ENCODE measurements at regions of chr16 and their contacts with region 1.

Region 1: GRCh38 chr16:10944249-10945064 is at the start of gene CLEC16A:
- DNase-seq: peak; percentile 95
- H3K4me3 Mint-ChIP-seq: peak within 1 kb of the TSS; percentile 82
- H3K27ac Mint-ChIP-seq: peak within 1 kb of the TSS; percentile 79
- H3K4me1 Mint-ChIP-seq: peaks cover 49% of the 10 kb centered on the region
- H3K27me3 Mint-ChIP-seq: no peaks in the 10 kb centered on the region
- total RNA-seq, gene CLEC16A: 44.8 and 48.7 TPM in 2 replicates

Region 2: GRCh38 chr16:10743610-10744393 is 200.7 kb before region 1 on chr16 and contains the start of gene NUBP1:
- intact Hi-C with region 1: loop called (anchors 2 kb)
- DNase-seq: peak; percentile 96
- H3K4me3 Mint-ChIP-seq: peak within 1 kb of the TSS; percentile 88
- H3K27ac Mint-ChIP-seq: peak within 1 kb of the TSS; percentile 96
- H3K4me1 Mint-ChIP-seq: peaks cover 44% of the 10 kb centered on the region
- H3K27me3 Mint-ChIP-seq: no peaks in the 10 kb centered on the region
- total RNA-seq, gene NUBP1: 33.9 and 35.9 TPM in 2 replicates

Region 3: GRCh38 chr16:10876799-10877341 is 67.6 kb before region 1 on chr16 and contains the start of gene CIITA:
- intact Hi-C with region 1: loop called (anchors 2 kb)
- DNase-seq: peak; percentile 60
- H3K4me3 Mint-ChIP-seq: peak within 1 kb of the TSS; percentile 80
- H3K27ac Mint-ChIP-seq: peak within 1 kb of the TSS; percentile 75
- H3K4me1 Mint-ChIP-seq: peaks cover 75% of the 10 kb centered on the region
- H3K27me3 Mint-ChIP-seq: peaks cover 4% of the 10 kb centered on the region
- total RNA-seq, gene CIITA: 8.6 and 9.3 TPM in 2 replicates

Region 4: GRCh38 chr16:11797166-11797956 is 852.9 kb after region 1 on chr16 and contains the start of gene ZC3H7A:
- intact Hi-C with region 1: loop called (anchors 5 kb)
- DNase-seq: peak; percentile 94
- H3K4me3 Mint-ChIP-seq: peak within 1 kb of the TSS; percentile 93
- H3K27ac Mint-ChIP-seq: peak within 1 kb of the TSS; percentile 96
- H3K4me1 Mint-ChIP-seq: peaks cover 67% of the 10 kb centered on the region
- H3K27me3 Mint-ChIP-seq: no peaks in the 10 kb centered on the region
- total RNA-seq, gene ZC3H7A: 63.4 and 71.1 TPM in 2 replicates

Region 5: GRCh38 chr16:12082226-12082887 is 1137.9 kb after region 1 on chr16:
- intact Hi-C with region 1: loop called (anchors 5 kb)
- DNase-seq: no peak
- H3K4me3 Mint-ChIP-seq: no peak overlapping the region
- H3K27ac Mint-ChIP-seq: peak overlapping the region; percentile 88
- H3K4me1 Mint-ChIP-seq: peaks cover 39% of the 10 kb centered on the region
- H3K27me3 Mint-ChIP-seq: no peaks in the 10 kb centered on the region